GM12878 (cell line): ENCODE measurements at regions of chr2 and their contacts with region 1.

Region 1: DNA sequence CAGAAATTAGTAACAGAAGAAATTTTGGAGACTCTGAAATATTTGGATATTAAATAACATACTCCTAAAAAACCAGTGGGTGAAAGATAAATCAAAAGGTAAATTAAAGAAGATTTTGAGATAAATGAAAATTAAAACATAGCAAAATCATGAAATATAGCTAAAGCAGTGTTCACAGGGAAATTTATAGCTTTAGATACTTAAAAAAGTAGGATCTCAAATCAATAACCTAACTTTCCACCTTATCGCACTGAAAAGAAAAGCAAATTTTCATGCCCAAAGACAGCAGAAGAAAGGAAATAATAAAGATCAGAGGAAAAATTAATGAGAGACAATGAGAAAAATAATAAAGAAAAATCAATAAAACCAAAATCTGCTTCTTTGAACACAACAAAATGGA is 135.1 kb upstream of the KLF7 start:
- DNase-seq: no peak
- ATAC-seq: no peak
- H3K4me3 ChIP-seq: no peak overlapping the region
- H3K27ac ChIP-seq: no peak overlapping the region
- H3K4me1 ChIP-seq: no peaks in the 10 kb centered on the region
- H3K27me3 ChIP-seq: no peaks in the 10 kb centered on the region
- CTCF ChIP-seq: no peak
- EP300 ChIP-seq: no peak
- POLR2A ChIP-seq: no peak
- RAD21 ChIP-seq: no peak

Region 2: DNA sequence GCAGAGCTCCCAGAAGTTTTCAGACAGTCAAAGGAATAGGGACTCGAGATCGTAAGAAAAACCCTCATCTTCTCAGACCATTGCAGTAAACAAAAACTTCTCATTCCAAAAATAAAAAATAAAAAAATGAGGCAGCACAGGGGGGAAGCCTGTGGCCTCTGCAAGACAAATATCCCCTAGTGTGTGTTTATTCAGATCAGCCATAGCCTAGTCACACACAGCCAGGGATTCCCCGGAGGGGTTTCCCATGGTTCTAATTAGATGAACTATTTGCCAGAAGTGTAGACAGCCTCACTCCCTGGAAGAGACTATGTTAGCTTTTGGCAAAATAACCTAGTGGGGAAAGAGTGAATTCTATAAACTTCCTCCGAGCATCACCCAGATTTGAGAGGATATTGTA is 12.2 kb before region 1 on chr2:
- CTCF ChIA-PET with region 1: interaction called, 4 read pairs
- POLR2A ChIA-PET with region 1: interaction called, 4 read pairs
- RAD21 ChIA-PET with region 1: interaction called, 9 read pairs
- SMC1A ChIA-PET with region 1: interaction called, 10 read pairs
- in situ Hi-C with region 1: no loop called
- intact Hi-C with region 1: no loop called
- DNase-seq: peak; percentile 59
- ATAC-seq: peak; percentile 89
- H3K4me3 ChIP-seq: no peak overlapping the region
- H3K27ac ChIP-seq: no peak overlapping the region
- H3K4me1 ChIP-seq: peaks cover 46% of the 10 kb centered on the region
- H3K27me3 ChIP-seq: no peaks in the 10 kb centered on the region
- CTCF ChIP-seq: no peak
- EP300 ChIP-seq: peak; percentile 41 to 44; a peak in 2 of 4 replicates
- POLR2A ChIP-seq: no peak
- RAD21 ChIP-seq: no peak